Dendritic cell treated with granulocyte-macrophage colony-stimulating factor and Interleukin-4, amounts not matched to agents 40 ng/mL and 50 ng/mL, for 4 days (primary cell): ENCODE measurements at regions of chr3 and their contacts with region 1.

Region 1: DNA sequence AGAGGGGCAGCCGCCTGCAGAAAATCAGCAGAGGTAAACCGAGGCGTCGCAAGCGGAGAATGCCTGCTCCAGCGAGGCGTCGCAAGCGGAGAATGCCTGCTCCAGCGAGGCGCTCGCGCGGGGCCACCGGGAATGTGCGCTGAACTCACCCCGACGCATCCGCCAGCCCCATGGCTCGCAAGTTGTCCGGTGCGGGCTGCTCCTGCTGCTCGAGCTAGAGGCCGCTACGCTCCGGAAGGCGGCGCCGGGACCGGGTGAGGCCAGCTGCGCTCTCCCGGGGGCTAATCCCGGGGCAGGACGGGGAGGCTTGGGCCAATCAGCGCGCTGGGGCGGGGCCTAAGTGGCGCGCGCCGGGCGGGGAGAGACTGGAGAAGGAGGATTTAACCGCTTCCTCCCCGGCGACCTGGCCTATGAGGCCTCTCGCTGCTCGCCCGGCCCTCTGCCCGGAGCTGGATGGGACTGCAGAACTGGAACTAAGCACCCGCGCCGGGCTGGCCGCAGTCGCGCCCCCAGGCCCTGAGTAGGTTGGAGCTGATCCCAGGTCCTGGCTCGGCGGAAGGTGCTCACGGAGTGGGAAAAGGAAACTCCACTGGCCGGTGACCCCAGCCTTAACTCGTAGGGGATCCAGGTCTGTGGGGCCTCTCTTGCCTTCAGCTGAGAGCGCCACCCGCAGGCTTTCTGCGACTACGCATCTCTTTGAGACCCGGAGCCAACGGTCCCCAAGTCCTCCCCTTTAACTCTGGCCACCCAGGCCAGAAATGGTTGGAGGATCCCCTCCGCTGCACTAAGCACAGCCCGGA is at the start of gene SLC26A6:
- H3K4me3 Mint-ChIP-seq: peak within 1 kb of the TSS; percentile 88
- H3K27ac Mint-ChIP-seq: peak within 1 kb of the TSS; percentile 86
- H3K4me1 Mint-ChIP-seq: peaks cover 40% of the 10 kb centered on the region
- H3K27me3 Mint-ChIP-seq: peaks cover 3% of the 10 kb centered on the region

Region 2: DNA sequence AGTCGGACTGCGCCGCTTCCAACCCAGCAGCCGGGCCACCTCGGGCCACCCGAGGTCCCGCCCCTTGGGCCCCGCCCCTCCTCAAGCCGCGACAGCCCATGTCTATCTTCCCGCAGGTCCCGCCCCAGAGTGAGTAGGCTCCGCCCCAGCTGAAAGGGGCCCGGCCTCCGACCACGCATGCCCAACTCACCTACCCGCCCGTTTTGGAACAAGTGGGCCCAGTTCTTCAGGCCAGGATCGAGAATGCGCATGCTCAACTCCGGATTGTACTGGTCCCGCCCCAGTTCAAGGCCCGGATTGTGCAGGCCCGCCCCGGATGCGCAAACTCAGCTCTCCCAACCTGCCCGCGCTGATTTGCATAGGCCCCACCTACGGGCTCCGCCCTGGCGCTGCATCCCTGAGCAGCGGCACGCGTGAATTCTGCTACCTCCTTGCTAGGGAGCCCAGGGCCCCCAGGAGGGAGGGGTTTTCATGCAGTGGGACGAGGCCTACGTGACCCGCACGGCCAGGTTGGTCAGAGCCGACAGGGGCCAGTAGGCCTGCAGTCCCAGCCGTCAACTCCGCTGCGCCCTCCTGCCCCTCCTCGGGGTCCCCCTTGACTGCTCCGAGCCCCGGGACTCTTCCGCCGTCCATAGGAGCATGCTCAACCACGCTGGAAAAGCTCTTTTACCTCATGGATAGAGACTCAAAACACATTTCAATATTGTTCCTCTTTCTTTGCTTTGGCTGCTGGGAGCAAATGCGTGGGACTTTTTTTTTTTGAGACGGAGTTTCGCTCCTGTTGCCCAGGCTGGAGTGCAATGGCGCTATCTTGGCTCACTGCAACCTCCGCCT is 78.4 kb before region 1 on chr3 and contains the start of gene PFKFB4:
- intact Hi-C with region 1: loop called (anchors 5 kb)
- H3K4me3 Mint-ChIP-seq: peak within 1 kb of the TSS; percentile 85
- H3K27ac Mint-ChIP-seq: peak within 1 kb of the TSS; percentile 98
- H3K4me1 Mint-ChIP-seq: peaks cover 93% of the 10 kb centered on the region
- H3K27me3 Mint-ChIP-seq: no peaks in the 10 kb centered on the region

Region 3: DNA sequence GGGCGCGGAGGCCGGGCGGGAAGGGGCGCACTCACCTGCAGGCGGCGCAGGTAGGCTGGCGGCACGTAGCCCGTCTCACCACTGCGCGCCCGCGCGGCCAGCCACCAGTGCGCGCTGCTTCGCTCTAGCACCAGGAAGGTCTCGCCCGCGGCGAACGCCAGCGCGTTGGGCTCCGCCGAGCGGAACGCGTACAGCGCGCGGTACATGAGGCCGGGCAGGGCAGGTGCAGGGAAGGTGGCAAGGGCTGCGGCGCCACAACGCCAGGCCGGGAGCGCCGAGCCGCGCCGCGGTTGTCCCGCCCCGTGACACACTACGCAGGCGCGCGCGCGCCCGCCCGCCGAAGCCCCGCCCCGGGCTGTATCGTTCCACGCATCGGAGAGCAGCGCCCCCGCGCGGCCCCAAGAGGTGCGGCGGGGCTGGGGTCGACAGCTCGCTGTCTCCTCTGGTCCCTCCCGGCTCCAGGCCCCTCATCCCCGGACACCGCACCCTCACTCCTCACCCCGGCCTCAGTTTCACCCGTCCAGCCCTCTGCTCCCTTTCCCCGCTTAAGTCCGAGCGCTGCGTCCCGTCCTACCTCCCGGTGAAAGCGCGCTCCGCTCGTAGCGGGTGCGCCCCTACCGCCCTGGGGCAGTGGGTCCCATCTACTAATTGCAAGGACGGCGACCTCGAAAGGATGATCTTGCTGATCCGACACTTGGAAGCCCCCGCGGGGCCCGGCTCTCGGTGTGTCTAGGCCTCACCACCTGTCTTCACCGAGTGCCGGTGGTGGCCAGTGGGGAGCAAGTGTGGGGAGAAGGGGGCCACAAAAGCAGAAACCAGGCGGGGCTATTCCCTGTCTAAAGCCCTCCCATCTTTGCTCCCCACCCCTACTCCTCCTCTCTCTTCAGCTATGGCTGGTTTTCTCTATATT is 50.4 kb after region 1 on chr3 and contains the start of gene NCKIPSD:
- intact Hi-C with region 1: loop called (anchors 1 kb)
- H3K4me3 Mint-ChIP-seq: peak within 1 kb of the TSS; percentile 87
- H3K27ac Mint-ChIP-seq: peak within 1 kb of the TSS; percentile 86
- H3K4me1 Mint-ChIP-seq: peaks cover 39% of the 10 kb centered on the region
- H3K27me3 Mint-ChIP-seq: peaks cover 1% of the 10 kb centered on the region